Endothelial cell of umbilical vein (primary cell): ENCODE measurements at regions of chr9 and their contacts with region 1.

Region 1: DNA sequence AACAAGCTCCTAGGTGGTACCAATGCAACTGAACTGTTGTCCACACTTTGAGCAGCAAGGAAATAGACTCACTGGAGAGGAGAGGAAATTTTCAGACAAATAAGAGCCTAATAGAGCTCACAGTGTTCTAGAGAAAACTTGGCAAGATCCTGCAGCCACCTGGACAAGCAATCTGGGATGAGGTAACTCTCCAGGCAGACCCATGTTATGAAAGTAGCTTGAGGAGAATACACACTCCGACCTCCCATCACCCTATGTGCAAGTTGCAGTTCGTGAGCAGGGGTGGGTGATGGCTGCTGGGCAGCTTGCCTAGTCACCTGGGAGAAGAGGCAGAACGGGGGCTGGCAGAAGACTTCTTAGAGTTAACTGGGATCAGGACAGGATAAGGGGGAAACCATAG is 102.2 kb downstream of the KLF4 start:
- DNase-seq: peak; percentile 5
- H3K4me3 ChIP-seq: no peak overlapping the region
- H3K27ac ChIP-seq: no peak overlapping the region
- H3K4me1 ChIP-seq: no peaks in the 10 kb centered on the region
- H3K27me3 ChIP-seq: no peaks in the 10 kb centered on the region
- CTCF ChIP-seq: no peak
- POLR2A ChIP-seq: no peak

Region 2: DNA sequence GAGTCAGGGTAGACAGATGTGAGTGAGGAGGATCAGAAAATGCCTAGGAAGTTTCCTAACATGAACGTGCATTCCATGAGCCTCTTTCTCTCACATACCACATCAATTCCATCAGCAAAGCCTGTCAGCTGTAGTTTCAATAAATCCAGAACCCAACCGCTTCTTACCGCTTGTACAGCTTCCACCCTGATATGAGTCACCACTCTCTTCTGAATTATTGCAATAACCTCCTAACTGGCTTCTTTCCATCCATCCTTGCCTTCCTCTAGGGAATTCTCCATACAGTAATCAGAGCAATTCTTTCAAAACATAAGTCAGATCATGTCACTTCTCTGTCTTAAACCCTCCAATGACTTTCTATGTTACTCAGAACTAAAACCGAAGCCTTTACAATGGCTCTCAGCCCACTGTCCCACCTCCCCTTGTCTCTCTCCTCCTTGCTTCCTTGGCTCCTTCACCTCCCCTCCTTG is 112.4 kb before region 1 on chr9:
- CTCF ChIA-PET with region 1: no interaction called
- POLR2A ChIA-PET with region 1: no interaction called
- dilution Hi-C with region 1: no loop called
- intact Hi-C with region 1: no loop called
- DNase-seq: no peak
- H3K4me3 ChIP-seq: no peak overlapping the region
- H3K27ac ChIP-seq: no peak overlapping the region
- H3K4me1 ChIP-seq: no peaks in the 10 kb centered on the region
- H3K27me3 ChIP-seq: peaks cover 10 to 13% of the 10 kb centered on the region in 2 experiments
- CTCF ChIP-seq: no peak
- POLR2A ChIP-seq: no peak

Region 3: DNA sequence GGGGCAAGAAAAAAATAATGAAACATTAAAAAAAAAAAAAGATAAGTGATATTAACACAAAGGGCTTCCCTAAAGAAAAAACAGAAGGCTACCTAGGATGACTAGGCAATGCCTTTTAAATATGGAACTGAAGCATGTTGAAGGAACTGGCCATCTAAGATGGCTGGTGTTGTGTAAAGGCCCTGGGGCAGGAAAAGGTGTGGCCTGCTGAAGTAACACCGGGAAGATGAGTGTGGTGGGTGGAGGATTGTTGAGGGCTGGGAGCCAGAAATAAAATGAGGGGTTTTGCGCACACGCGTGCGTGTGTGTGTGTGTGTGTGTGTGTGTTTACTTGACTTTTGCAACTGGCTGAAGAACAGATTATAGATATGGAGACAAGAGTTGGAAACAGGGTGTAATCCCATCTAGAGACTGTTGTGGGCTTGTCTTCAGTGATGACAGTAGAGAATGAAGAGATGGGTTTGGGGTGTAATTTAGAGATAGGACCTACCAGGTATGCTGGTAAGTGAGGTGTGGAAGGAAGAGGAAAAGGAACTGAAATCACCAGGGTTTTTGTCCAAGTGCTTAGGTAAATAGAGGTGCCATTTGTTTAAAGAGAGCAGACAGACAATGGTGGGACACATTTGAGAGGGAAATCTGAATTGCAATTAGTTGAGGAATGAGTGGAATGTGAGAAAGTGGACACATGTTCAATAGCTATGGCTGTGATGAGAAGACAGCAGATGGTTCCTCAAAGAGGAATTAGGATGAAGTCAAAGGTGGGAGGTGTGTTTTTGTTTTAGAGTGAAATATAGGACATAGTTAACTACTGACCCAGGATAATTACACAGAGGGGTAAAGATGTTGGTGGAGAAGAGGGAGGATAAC is 70.4 kb before region 1 on chr9:
- CTCF ChIA-PET with region 1: no interaction called
- POLR2A ChIA-PET with region 1: no interaction called
- dilution Hi-C with region 1: no loop called
- intact Hi-C with region 1: no loop called
- DNase-seq: no peak
- H3K4me3 ChIP-seq: no peak overlapping the region
- H3K27ac ChIP-seq: no peak overlapping the region
- H3K4me1 ChIP-seq: no peaks in the 10 kb centered on the region
- H3K27me3 ChIP-seq: no peaks in the 10 kb centered on the region
- CTCF ChIP-seq: no peak
- POLR2A ChIP-seq: no peak

Region 4: DNA sequence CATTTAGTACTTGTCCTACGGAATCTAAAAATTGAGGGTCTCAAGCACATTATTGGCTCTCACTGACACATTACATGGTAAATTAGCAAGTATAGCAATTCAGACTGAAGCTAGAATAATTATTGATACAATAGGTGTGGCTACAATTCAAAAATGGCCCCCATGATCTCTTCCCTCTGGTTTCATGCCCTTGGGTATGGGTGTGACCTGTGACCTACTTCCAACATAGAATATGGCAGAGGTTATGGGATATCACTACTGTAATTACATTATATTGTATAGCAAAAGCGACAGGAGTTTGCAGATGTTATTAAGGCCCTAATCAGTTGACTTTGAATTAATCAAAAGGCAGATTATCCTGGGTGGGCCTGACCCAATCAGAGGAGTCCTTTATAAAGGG is 25.9 kb after region 1 on chr9:
- CTCF ChIA-PET with region 1: no interaction called
- POLR2A ChIA-PET with region 1: no interaction called
- dilution Hi-C with region 1: no loop called
- intact Hi-C with region 1: loop called (anchors 1 kb)
- DNase-seq: no peak
- H3K4me3 ChIP-seq: no peak overlapping the region
- H3K27ac ChIP-seq: no peak overlapping the region
- H3K4me1 ChIP-seq: no peaks in the 10 kb centered on the region
- H3K27me3 ChIP-seq: no peaks in the 10 kb centered on the region
- CTCF ChIP-seq: no peak
- POLR2A ChIP-seq: no peak